ENCODE measurements at regions of chr11 and their contacts with region 1.

Region 1: DNA sequence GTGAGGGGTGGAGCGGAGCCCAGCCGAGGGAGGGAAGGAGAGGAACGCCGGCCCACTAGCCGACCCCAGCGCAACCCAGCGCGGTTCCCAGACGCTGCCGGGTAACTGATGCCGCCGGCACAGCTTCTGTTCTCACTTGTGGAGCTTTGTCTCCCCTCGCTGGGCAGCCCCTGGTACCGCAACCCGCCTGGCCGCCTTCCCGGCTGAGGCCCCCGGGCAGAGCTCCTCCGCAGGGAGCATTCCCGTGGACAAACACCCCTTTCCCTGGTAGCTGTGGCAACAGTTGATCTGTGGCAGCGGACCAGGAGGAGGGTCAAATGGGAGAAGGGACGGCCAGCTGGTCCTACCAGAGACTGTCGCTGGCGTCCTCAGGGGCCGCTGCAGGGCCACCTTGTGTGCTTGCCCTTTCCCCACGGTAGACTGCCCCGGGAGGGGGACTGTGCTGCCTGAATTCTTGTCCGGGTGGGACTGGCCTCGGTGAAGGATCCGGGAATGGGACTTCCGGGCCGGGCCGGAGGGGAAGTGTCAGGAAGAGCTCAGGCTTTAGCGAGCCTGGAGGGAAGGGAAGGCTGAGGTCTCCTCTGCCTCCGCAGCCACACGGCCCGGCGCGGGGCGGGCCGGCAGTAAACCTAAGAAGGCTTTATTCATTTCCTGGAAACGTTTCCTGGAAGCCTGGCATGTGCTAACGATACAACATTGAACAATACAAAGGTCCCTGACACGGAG is 468.0 kb downstream of the OPCML start:
- DNase-seq: peak; percentile 25 to 72
- H3K4me3 ChIP-seq: peak overlapping the region; percentile 52 to 75 (median 58)
- H3K27ac ChIP-seq: peak overlapping the region; percentile 29 to 60
- H3K4me1 ChIP-seq: no peaks in the 10 kb centered on the region
- H3K27me3 ChIP-seq: peaks cover 0 to 4% of the 10 kb centered on the region in 2 donors
- CTCF ChIP-seq: peak in 2 of 3 donors; percentile 22 to 43
- POLR2A ChIP-seq: no peak

Region 2: GRCh38 chr11:133104009-133104744 is 39.9 kb after region 1 on chr11:
- intact Hi-C with region 1: loop called (anchors 2 kb)
- DNase-seq: no peak
- H3K4me3 ChIP-seq: no peak overlapping the region
- H3K27ac ChIP-seq: no peak overlapping the region
- H3K4me1 ChIP-seq: no peaks in the 10 kb centered on the region
- H3K27me3 ChIP-seq: no peaks in the 10 kb centered on the region
- CTCF ChIP-seq: no peak
- POLR2A ChIP-seq: no peak

Region 3: GRCh38 chr11:134139873-134140331 is 1075.6 kb after region 1 on chr11:
- intact Hi-C with region 1: no loop called
- DNase-seq: peak in 1 of 2 donors; percentile 62
- H3K4me3 ChIP-seq: no peak overlapping the region
- H3K27ac ChIP-seq: peak overlapping the region; percentile 59 to 70
- H3K4me1 ChIP-seq: no peaks in the 10 kb centered on the region
- H3K27me3 ChIP-seq: no peaks in the 10 kb centered on the region
- CTCF ChIP-seq: peak; percentile 47 to 88 (median 84)
- POLR2A ChIP-seq: no peak